Astrocyte of the cerebellum (primary cell): ENCODE measurements at regions of chr4 and their contacts with region 1.

Region 1: DNA sequence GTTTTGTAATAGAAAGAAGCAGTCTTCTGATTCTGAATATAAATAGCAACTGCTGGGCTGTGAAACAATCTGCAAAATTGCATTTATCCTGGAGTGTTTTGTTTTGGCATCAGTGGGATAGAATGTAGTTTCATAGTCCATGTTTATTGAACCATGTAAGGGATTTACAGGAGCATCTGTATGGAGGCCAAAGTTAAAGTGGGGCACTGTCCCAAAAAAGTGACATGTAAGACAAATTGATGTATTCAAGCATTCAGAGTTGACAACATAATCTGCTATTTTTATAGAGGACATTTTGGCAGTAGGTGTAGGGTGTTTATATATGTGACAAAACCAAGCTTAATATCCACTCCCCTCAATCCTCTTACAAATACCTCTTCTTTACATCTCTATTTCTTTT is 200.5 kb upstream of the ANK2 start:
- DNase-seq: no peak
- H3K4me3 ChIP-seq: no peak overlapping the region
- CTCF ChIP-seq: no peak

Region 2: GRCh38 chr4:112795112-112795511 is 53.8 kb before region 1 on chr4:
- in situ Hi-C with region 1: no loop called
- DNase-seq: no peak
- H3K4me3 ChIP-seq: no peak overlapping the region
- CTCF ChIP-seq: no peak

Region 3: DNA sequence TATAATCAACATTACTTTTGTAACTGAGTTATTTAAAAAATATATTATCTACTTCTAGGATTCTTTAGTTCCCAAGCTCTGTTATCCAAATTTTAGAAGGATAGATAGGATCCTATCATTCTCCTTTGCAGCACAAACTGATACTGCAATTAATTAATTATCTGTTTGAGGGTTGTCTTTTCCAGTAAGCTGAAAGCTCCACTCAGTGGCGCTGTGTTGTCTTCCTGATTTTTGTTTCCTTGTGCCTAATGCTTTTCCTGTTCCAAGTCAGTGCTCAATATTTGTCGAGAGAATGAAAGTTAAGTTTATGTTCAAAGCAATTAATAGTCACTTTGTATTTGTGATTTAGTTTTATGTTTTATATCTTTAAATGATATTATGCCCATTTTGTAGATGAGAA is 93.2 kb after region 1 on chr4:
- in situ Hi-C with region 1: loop called (anchors 5 kb)
- DNase-seq: no peak
- H3K4me3 ChIP-seq: no peak overlapping the region
- CTCF ChIP-seq: no peak